Activated CD4-positive, alpha-beta T cell treated with anti-CD3 and anti-CD28 coated beads, Interleukin-2, amount 10 ng/mL, durations not matched to agents 7 days and 5 days (primary cell): ENCODE measurements at regions of chr12 and their contacts with region 1.

Region 1: GRCh38 chr12:111451649-111452129 is 46.0 kb downstream of the SH2B3 start:
- DNase-seq: peak; percentile 47
- H3K4me3 Mint-ChIP-seq: no peak overlapping the region
- H3K27ac Mint-ChIP-seq: peak overlapping the region; percentile 10
- H3K4me1 Mint-ChIP-seq: peaks cover 41% of the 10 kb centered on the region
- H3K27me3 Mint-ChIP-seq: no peaks in the 10 kb centered on the region

Region 2: GRCh38 chr12:111405149-111405860 is 46.4 kb before region 1 on chr12:
- CTCF ChIA-PET with region 1: interaction called, 79 read pairs
- POLR2A ChIA-PET with region 1: no interaction called
- DNase-seq: peak; percentile 98
- H3K4me3 Mint-ChIP-seq: peak overlapping the region; percentile 75
- H3K27ac Mint-ChIP-seq: peak overlapping the region; percentile 85
- H3K4me1 Mint-ChIP-seq: peaks cover 55% of the 10 kb centered on the region
- H3K27me3 Mint-ChIP-seq: no peaks in the 10 kb centered on the region

Region 3: DNA sequence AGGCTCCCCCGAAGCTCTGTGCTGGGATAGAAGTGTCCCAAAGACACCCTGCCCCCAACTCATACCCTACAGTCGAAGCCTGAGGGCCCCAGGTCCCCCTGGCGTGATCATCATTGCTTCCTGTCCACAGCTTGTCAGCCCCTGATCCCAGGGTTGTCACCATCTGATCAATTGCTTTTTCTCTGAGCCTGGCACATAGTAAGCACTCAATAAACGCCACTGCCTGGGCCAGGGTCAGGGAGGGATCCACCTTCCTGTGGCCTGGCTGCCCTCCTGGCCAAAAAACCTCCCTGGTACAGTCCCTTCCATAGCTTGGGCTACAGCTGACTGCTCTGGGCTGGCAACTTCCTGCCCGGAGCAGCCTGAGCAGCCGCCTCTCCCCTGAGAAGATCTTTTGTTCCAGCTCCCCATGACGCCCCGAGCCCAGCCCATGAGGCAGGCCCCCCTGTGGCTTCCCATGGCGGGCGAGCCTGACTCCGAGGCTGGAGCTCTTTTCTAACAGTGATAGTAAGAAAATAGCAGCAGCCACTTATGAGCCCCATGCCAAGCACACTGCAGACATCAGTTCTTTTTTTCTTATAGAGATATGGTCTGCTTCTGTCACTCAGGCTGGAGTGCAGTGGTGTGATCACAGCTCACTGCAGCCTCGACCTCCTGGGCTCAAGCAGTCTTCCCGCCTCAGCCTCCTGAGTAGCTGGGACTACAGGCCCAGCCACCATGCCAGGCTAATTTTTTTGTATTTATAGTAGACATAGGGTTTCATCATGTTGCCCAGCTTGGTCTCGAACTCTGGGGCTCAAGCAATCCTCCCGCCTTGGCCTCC is 39.5 kb before region 1 on chr12:
- CTCF ChIA-PET with region 1: interaction called, 18 read pairs
- POLR2A ChIA-PET with region 1: no interaction called
- DNase-seq: no peak
- H3K4me3 Mint-ChIP-seq: peak overlapping the region; percentile 1
- H3K27ac Mint-ChIP-seq: peak overlapping the region; percentile 88
- H3K4me1 Mint-ChIP-seq: peaks cover 72% of the 10 kb centered on the region
- H3K27me3 Mint-ChIP-seq: no peaks in the 10 kb centered on the region

Region 4: GRCh38 chr12:111434680-111435338 is 16.9 kb before region 1 on chr12:
- CTCF ChIA-PET with region 1: interaction called, 46 read pairs
- POLR2A ChIA-PET with region 1: no interaction called
- DNase-seq: peak; percentile 88
- H3K4me3 Mint-ChIP-seq: peak overlapping the region; percentile 64
- H3K27ac Mint-ChIP-seq: peak overlapping the region; percentile 98
- H3K4me1 Mint-ChIP-seq: peaks cover 93% of the 10 kb centered on the region
- H3K27me3 Mint-ChIP-seq: no peaks in the 10 kb centered on the region

Region 5: DNA sequence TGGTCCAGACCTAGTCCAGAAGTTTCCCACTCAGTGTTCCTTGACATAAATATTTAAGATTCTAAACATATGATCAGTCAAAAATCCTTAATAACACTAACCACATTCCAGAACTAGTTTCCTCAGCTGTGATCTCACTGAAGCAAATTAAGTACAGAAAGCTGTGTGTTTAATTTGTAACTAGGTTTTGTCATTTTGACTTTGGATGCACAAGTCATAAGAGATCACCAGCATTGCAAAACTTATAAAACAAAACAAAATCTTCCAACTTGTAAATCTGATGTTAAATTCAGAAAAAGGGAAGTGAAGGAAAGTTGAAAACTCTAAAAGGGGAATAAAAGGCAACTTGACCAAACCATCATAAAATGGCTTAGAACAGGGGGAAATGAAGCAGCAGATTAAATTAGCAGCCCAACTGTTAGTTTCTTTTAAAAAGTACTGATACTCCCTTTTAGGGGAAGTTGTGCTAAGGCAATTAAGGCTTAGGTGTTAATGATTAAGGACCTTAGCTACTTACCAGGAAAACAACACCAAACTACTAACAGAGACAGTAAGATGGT is 10.6 kb after region 1 on chr12:
- CTCF ChIA-PET with region 1: interaction called, 11 read pairs
- POLR2A ChIA-PET with region 1: no interaction called
- DNase-seq: no peak
- H3K4me3 Mint-ChIP-seq: no peak overlapping the region
- H3K27ac Mint-ChIP-seq: no peak overlapping the region
- H3K4me1 Mint-ChIP-seq: peaks cover 1% of the 10 kb centered on the region
- H3K27me3 Mint-ChIP-seq: no peaks in the 10 kb centered on the region

Region 6: GRCh38 chr12:111488271-111488670 is 36.6 kb after region 1 on chr12:
- CTCF ChIA-PET with region 1: no interaction called
- POLR2A ChIA-PET with region 1: no interaction called
- DNase-seq: no peak
- H3K4me3 Mint-ChIP-seq: no peak overlapping the region
- H3K27ac Mint-ChIP-seq: no peak overlapping the region
- H3K4me1 Mint-ChIP-seq: no peaks in the 10 kb centered on the region
- H3K27me3 Mint-ChIP-seq: no peaks in the 10 kb centered on the region